Dorsolateral prefrontal cortex (tissue), 120 donors: ENCODE measurements at regions of chr11 and their contacts with region 1.

Region 1: DNA sequence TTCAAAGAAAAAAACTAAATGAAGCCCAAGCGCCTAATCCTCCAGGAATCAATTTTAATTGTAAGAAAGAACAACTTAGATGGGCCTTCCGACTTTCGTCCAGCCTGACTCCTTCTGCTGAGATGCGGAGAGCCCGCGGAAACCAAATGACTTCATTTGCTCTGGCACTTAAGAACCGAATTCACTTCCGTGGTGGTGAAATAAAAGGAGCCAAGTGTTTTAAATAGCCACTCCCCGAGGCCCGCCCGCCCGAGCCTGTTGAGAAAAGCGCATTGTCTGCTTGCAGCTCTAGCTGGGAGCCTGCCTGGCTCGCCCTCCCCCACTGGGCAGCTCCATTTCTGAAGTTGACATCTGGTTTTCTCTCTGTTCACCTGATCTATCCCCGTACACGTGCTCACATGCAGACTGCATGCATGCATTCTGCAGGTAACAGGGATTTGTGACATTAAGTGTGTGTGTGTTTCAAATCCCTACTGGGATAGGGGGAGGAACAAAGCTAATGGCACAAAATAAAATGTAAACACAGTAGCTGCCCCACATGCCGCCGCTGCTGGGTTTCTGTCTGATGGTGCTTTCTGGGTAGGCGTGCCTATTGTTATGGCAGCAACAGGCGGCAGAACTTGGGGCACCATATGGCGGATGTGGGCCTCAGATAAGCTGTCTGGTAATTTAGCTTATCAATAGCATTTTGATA is 6.2 kb downstream of the TEAD1 start:
- DNase-seq: peak; percentile 40 to 91 (median 88)
- H3K4me3 ChIP-seq: peak overlapping the region in 57 of 59 donors; percentile 1 to 64 (median 41)
- H3K27ac ChIP-seq: peak overlapping the region in 57 of 59 donors; percentile 7 to 90 (median 73)
- H3K27me3 ChIP-seq: no peaks in the 10 kb centered on the region
- CTCF ChIP-seq: peak in 11 of 56 donors; percentile 7 to 49 (median 22)

Region 2: GRCh38 chr11:12581923-12582322 is 98.5 kb before region 1 on chr11:
- intact Hi-C with region 1: no loop called
- DNase-seq: no peak
- H3K4me3 ChIP-seq: no peak overlapping the region
- H3K27ac ChIP-seq: no peak overlapping the region
- H3K27me3 ChIP-seq: peaks cover 0 to 3% (median 0%) of the 10 kb centered on the region in 45 donors
- CTCF ChIP-seq: no peak

Region 3: DNA sequence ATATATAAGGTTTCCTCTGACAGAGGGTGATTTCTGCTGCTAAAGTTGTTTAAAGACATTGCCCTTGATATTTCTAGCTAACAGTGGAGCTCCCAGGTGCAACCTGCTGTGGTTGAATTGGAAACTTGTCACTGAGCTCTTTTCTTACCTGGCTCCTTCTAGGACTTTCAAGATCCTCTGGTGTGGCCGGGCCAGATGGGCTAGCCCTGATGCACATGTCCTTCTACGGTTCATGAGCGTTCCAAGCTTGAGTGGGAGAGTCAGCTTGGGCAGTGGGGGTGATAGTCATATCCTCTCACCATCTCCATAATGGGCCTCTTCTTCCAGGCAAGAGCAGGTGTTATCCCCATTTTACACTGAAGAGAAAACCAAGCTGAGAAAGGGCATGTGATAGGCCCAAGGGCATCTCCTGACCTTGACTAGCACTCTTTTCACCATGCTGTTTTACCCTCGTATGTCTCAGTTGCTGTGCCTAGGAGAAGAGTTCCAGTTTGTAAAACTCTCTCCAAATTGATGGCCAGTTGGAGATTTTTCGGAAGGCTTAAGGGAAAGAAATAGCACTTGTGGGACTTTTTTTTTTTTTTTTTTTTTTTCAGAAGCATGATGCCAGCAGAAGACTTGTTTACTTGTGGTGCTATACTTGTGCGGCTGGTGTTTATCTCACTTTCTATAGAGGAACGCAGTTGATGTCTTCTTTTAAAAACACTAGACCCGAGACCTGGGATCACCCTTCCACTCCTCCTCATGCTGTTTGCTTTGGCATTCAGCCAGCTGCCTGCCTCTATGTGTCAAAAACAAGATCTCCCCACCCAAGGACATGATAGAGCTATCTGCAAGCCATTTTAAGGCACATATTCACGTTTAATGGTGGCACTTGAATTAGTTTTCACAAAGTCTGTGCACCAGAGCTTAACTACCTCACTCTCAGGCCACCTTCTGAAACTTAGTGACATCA is 26.4 kb after region 1 on chr11:
- intact Hi-C with region 1: no loop called
- DNase-seq: no peak
- H3K4me3 ChIP-seq: no peak overlapping the region
- H3K27ac ChIP-seq: no peak overlapping the region
- H3K27me3 ChIP-seq: no peaks in the 10 kb centered on the region
- CTCF ChIP-seq: no peak

Region 4: DNA sequence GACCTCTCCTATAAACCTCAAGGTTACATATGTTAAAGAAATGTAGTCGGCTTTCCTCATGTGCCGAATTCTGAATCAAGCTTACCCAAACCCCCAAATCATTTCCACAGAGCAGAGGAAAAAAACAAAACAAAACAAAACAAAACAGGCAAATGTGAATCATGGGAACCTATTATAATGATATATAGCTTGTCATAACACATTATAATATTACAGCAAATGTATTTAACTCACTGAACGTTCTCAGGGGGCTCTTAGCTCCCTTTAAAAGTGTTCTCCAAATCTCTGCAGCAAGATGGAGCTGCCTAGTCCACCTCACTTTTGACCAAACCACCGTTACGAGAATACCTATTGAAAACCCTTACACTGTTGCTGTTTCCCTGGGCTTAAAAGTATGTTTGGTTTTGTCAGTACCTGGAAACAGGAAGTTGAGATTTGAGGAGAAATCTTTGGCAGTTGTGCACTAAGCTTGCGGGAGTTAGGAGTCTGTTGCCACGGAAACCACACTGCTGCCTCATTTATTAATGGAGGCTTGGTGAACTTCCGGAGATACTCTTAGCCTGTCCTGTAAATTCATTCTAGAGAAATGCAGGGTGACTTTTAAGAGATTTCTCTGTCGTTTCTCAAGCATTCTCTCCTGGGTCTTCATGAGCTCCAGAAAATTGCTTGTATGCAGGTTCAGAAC is 161.7 kb after region 1 on chr11:
- intact Hi-C with region 1: loop called in 1 of 2 experiments (anchors 10 kb)
- DNase-seq: peak in 2 of 10 donors; percentile 10 to 32
- H3K4me3 ChIP-seq: peak overlapping the region in 46 of 59 donors; percentile 1 to 47 (median 22)
- H3K27ac ChIP-seq: peak overlapping the region in 1 of 59 donors; percentile 23
- H3K27me3 ChIP-seq: no peaks in the 10 kb centered on the region
- CTCF ChIP-seq: no peak

Region 5: DNA sequence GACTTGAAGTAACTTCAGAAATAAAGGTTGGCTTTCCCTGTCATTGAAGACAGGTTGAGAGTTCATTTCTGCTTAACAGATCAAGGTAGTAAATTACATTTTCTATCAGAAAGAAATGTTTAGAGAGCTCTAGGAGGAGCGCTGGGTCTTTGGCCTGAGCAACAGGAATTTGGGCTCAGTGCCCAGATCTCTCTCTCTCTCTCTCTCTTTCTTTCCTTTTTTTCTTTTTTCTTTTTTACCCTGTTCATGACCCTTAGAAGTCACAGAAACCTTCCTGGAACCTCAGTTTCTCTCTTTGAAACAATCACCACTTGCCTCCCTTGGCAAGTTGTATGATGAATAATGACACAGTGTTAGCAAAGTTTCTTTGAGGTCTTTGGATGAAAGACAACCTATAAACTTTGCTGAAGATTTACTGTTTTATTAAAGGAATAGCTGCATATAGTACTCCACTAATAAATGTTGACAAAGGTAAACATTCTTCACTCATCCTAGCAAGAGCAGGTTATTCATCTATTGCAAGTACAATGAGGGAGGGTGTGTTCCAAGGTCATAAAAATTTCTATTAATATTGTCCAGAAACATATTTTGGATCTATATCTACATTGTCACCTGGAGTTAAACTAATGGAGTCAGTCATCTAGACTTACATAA is 293.3 kb after region 1 on chr11:
- intact Hi-C with region 1: no loop called
- DNase-seq: no peak
- H3K4me3 ChIP-seq: no peak overlapping the region
- H3K27ac ChIP-seq: no peak overlapping the region
- H3K27me3 ChIP-seq: peaks cover 0 to 16% (median 0%) of the 10 kb centered on the region in 45 donors
- CTCF ChIP-seq: no peak